OCI-LY7 (cell line): ENCODE measurements at regions of chr1 and their contacts with region 1.

Region 1: GRCh38 chr1:70134148-70134547 is 71.2 kb downstream of the LRRC40 start:
- DNase-seq: no peak
- H3K4me3 ChIP-seq: no peak overlapping the region
- H3K27ac ChIP-seq: no peak overlapping the region
- H3K4me1 ChIP-seq: peaks cover 3% of the 10 kb centered on the region
- CTCF ChIP-seq: no peak

Region 2: GRCh38 chr1:70487910-70488665 is 353.9 kb after region 1 on chr1:
- CTCF ChIA-PET with region 1: no interaction called
- POLR2A ChIA-PET with region 1: no interaction called
- intact Hi-C with region 1: loop called (anchors 1 kb)
- DNase-seq: peak; percentile 56
- H3K4me3 ChIP-seq: no peak overlapping the region
- H3K27ac ChIP-seq: no peak overlapping the region
- H3K4me1 ChIP-seq: no peaks in the 10 kb centered on the region
- CTCF ChIP-seq: peak; percentile 85

Region 3: DNA sequence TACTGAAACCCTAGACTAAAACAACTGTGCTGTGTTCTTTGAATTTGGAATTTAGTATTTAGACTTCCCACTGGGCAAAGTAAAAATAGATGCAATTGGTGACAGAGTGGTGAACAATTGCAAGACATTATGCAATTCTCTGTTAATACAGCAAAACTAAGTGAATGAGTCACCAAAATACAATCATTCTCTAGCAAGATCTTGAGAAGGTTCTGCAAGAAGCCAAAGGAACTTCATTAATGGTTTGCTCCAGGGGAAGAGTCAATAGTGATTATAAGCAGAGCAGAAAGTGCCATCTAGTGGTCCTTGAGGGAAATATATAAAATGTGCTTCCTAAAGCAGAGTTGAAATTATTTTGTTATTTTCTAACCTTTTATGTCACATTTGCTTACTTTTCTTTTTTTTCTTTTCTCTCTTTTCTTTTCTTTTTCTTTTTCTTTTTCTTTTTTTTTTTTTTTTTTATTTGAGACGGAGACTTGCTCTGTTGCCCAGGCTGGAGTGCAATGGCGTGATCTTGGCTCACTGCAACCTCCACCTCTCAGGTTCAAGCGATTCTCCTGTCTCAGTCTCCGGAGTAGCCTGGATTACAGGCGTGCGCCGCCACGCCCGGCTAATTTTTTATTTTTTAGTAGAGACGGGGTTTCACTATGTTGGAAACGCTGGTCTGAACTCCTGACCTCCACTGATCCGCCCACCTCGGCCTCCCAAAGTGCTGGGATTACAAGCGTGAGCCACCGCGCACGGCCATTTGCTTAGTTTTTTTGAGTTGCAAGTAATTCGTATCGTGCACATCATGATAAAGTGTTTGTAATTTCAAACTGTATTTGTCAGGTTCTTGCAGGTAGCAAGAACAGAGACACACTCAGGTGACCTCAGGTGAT is 376.1 kb after region 1 on chr1:
- CTCF ChIA-PET with region 1: no interaction called
- POLR2A ChIA-PET with region 1: interaction called, 4 read pairs
- intact Hi-C with region 1: loop called (anchors 1 kb)
- DNase-seq: peak; percentile 76
- H3K4me3 ChIP-seq: no peak overlapping the region
- H3K27ac ChIP-seq: no peak overlapping the region
- H3K4me1 ChIP-seq: no peaks in the 10 kb centered on the region
- CTCF ChIP-seq: peak; percentile 80